ENCODE measurements at regions of chr16 and their contacts with region 1.

Region 1: GRCh38 chr16:21083729-21084268 is 66.8 kb downstream of the DNAH3 start:
- DNase-seq: peak in 4 of 5 donors; percentile 7 to 30 (median 24)
- H3K4me3 ChIP-seq: no peak overlapping the region
- H3K4me3 Mint-ChIP-seq: no peak overlapping the region
- H3K27ac ChIP-seq: no peak overlapping the region
- H3K27ac Mint-ChIP-seq: no peak overlapping the region
- H3K4me1 ChIP-seq: no peaks in the 10 kb centered on the region
- H3K4me1 Mint-ChIP-seq: no peaks in the 10 kb centered on the region
- H3K27me3 ChIP-seq: peaks cover 6% of the 10 kb centered on the region
- H3K27me3 Mint-ChIP-seq: peaks cover 8 to 10% of the 10 kb centered on the region in 2 donors

Region 2: DNA sequence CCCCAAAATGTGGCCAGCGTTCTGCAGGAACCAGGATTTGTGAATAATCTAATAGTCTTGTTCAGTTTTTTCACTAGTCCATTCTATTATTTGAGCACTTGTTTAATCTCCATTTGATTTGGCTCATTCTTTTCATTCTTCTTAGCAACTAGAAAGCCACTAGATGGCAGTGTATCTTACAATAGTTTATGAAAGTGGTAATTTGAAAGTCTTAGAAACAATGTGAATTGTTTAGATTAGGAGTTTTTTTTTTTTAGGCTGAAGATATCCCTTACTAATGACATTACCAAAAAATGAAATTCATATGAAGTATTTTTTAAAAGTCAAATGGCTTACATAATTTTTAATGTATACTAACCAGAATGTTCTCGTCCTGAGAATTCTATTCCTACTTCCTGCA is 284.2 kb before region 1 on chr16:
- CTCF ChIA-PET with region 1: no interaction called
- POLR2A ChIA-PET with region 1: no interaction called
- intact Hi-C with region 1: loop called (anchors 10 kb)
- DNase-seq: peak in 4 of 5 donors; percentile 5 to 45 (median 14)
- H3K4me3 ChIP-seq: no peak overlapping the region
- H3K4me3 Mint-ChIP-seq: peak overlapping the region in 1 of 8 donors; percentile 17
- H3K27ac ChIP-seq: no peak overlapping the region
- H3K27ac Mint-ChIP-seq: peak overlapping the region in 1 of 7 donors; percentile 17
- H3K4me1 ChIP-seq: peaks cover 17% of the 10 kb centered on the region
- H3K4me1 Mint-ChIP-seq: peaks cover 15 to 22% (median 17%) of the 10 kb centered on the region in 4 donors
- H3K27me3 ChIP-seq: no peaks in the 10 kb centered on the region
- H3K27me3 Mint-ChIP-seq: no peaks in the 10 kb centered on the region

Region 3: DNA sequence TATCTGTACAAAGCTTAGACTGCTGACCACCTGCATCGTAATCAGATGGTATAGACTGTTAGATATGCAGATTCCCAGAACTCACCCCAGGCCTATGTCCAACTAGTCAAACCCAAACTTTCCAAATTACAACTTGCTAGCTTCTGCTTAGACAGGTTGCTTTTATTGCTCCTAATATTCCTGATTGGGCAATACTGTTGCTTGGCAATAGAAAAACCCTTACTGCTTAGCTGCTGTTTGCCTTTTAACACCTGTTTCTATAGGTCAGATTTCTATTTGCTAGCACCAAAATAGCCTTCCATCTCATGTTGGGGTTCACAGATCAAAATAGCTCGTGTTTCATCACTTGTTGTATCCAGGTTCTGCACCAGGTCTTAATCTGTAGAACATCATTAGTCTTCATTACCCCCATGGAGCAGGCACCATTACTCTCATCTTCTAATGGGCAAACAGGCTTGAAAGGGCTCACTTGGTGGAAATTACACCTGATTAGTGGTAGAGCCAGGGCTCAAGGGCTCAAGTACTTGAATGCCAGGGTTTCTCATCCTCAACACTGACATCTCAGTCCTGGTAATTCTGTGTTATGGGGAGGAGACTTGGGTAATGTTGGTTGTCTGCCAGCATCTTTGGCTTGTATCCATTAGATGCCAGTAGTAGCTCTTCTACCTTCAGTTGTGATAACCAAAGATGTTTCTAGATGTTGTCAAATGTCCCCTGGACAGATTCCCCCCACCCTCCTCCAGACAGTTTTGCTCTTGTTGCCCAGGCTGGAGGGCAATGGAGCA is 124.8 kb after region 1 on chr16:
- CTCF ChIA-PET with region 1: no interaction called
- POLR2A ChIA-PET with region 1: no interaction called
- intact Hi-C with region 1: no loop called
- DNase-seq: no peak
- H3K4me3 ChIP-seq: no peak overlapping the region
- H3K4me3 Mint-ChIP-seq: no peak overlapping the region
- H3K27ac ChIP-seq: no peak overlapping the region
- H3K27ac Mint-ChIP-seq: no peak overlapping the region
- H3K4me1 ChIP-seq: no peaks in the 10 kb centered on the region
- H3K4me1 Mint-ChIP-seq: no peaks in the 10 kb centered on the region
- H3K27me3 ChIP-seq: no peaks in the 10 kb centered on the region
- H3K27me3 Mint-ChIP-seq: peaks cover 8 to 9% of the 10 kb centered on the region in 2 donors